ENCODE measurements at regions of chr10 and their contacts with region 1.

Region 1: GRCh38 chr10:102231357-102232318 is 5.5 kb downstream of the ELOVL3 start:
- DNase-seq: peak; percentile 58 to 67 (median 65)
- H3K4me3 ChIP-seq: peak overlapping the region in 1 of 2 donors; percentile 41
- H3K4me3 Mint-ChIP-seq: peak overlapping the region; percentile 65 to 85 (median 80)
- H3K27ac ChIP-seq: no peak overlapping the region
- H3K27ac Mint-ChIP-seq: peak overlapping the region in 1 of 7 donors; percentile 56
- H3K4me1 ChIP-seq: peaks cover 20% of the 10 kb centered on the region
- H3K4me1 Mint-ChIP-seq: peaks cover 0 to 14% (median 4%) of the 10 kb centered on the region in 4 donors
- H3K27me3 ChIP-seq: peaks cover 9% of the 10 kb centered on the region
- H3K27me3 Mint-ChIP-seq: peaks cover 19 to 35% of the 10 kb centered on the region in 2 donors

Region 2: DNA sequence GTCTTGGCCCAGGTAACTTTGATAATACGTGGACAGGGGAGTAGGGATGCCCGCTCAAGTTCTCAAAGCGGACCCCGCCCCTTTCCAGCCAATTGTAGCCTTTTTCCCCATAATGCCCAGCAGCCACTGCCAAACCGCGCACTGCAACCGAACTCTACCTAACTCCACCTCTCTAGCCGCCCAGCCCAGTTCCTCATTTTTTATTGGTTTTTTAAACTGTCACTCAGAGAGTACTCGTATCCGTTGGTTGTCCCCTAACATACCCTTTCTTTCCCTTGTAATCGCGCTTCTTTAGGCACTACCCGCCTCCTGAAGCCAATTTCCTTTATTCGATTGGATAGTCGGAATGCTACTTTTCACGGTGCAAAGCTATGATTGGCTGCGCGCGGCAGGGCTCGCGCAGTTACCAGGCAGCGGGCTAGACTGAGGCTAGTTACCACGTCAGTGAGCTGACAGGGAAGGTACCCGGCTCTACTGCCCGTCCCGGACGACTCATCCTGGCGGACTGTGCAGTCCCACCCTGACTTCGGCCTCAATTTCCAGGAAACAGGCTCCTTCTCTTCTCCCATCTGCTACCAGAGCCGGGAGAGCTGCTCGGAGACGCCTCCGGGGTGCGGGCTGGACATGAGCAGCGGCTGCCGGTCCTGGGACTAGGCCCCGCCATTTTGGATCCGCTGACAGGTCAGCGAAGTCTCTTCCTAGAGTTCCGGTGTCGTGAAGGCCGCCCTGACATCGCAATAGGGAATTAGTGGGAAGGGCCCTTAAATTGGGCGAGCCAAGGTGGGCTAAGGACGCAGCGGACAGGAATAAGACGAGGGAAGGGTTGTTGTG is 13.7 kb after region 1 on chr10 and contains the start of gene GBF1:
- CTCF ChIA-PET with region 1: interaction called, 46 read pairs
- POLR2A ChIA-PET with region 1: interaction called, 22 read pairs
- intact Hi-C with region 1: loop called (anchors 1 kb)
- DNase-seq: peak; percentile 95 to 98 (median 96)
- H3K4me3 ChIP-seq: peak within 1 kb of the TSS; percentile 51 to 94
- H3K4me3 Mint-ChIP-seq: peak within 1 kb of the TSS; percentile 84 to 99 (median 98)
- H3K27ac ChIP-seq: peak within 1 kb of the TSS; percentile 96
- H3K27ac Mint-ChIP-seq: peak within 1 kb of the TSS; percentile 89 to 98 (median 97)
- H3K4me1 ChIP-seq: peaks cover 64% of the 10 kb centered on the region
- H3K4me1 Mint-ChIP-seq: peaks cover 38 to 66% (median 50%) of the 10 kb centered on the region in 4 donors
- H3K27me3 ChIP-seq: peaks cover 6% of the 10 kb centered on the region
- H3K27me3 Mint-ChIP-seq: peaks cover 3 to 16% of the 10 kb centered on the region in 2 donors
- total RNA-seq, gene GBF1: 39.6 to 44.7 TPM

Region 3: DNA sequence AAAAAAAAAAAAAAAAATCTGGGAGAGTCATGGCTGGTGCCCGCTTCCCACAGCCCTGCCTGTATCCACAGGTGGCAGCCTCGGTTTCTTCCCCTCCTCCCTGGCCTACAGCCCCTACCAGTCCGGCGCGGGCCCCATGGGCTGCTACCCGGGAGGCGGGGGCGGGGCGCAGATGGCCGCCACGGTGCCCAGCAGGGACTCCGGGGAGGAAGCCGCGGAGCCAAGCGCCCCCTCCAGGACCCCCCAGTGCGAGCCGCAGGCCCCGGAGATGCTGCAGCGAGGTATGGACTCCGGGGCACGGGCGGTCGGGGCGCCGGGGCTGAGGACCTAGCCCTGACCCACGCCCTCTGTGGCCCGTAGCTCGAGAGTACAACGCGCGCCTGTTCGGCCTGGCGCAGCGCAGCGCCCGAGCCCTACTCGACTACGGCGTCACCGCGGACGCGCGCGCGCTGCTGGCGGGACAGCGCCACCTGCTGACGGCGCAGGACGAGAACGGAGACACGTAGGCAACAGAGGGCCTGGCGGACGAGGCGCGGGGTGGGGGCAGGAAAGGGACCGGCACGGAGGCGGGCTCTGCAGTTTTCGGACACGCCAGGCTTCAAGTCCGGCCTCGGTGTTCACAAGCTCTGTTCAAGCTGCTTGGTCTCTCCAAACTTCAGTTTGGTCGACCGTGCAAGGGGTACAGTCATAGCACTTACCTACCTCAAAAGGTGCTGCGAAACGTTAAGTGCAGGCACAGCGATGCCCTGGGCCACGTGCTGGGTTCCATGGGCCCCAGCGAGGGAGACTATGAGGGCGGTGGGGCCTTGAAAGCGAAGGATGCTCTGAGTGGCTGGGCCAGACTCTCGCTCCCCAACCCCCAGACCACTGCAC is 167.8 kb after region 1 on chr10:
- CTCF ChIA-PET with region 1: interaction called, 88 read pairs
- POLR2A ChIA-PET with region 1: interaction called, 23 read pairs
- intact Hi-C with region 1: loop called (anchors 1 kb)
- DNase-seq: peak; percentile 86 to 90 (median 87)
- H3K4me3 ChIP-seq: peak overlapping the region in 1 of 2 donors; percentile 49
- H3K4me3 Mint-ChIP-seq: peak overlapping the region; percentile 53 to 81 (median 74)
- H3K27ac ChIP-seq: peak overlapping the region; percentile 100
- H3K27ac Mint-ChIP-seq: peak overlapping the region; percentile 89 to 100 (median 100)
- H3K4me1 ChIP-seq: peaks cover 44% of the 10 kb centered on the region
- H3K4me1 Mint-ChIP-seq: peaks cover 19 to 68% (median 32%) of the 10 kb centered on the region in 4 donors
- H3K27me3 ChIP-seq: no peaks in the 10 kb centered on the region
- H3K27me3 Mint-ChIP-seq: no peaks in the 10 kb centered on the region

Region 4: GRCh38 chr10:102998005-102998404 is 766.4 kb after region 1 on chr10:
- CTCF ChIA-PET with region 1: no interaction called
- POLR2A ChIA-PET with region 1: no interaction called
- intact Hi-C with region 1: no loop called
- DNase-seq: no peak
- H3K4me3 ChIP-seq: no peak overlapping the region
- H3K4me3 Mint-ChIP-seq: no peak overlapping the region
- H3K27ac ChIP-seq: no peak overlapping the region
- H3K27ac Mint-ChIP-seq: no peak overlapping the region
- H3K4me1 ChIP-seq: peaks cover 7% of the 10 kb centered on the region
- H3K4me1 Mint-ChIP-seq: peaks cover 4 to 21% (median 12%) of the 10 kb centered on the region in 4 donors
- H3K27me3 ChIP-seq: no peaks in the 10 kb centered on the region
- H3K27me3 Mint-ChIP-seq: no peaks in the 10 kb centered on the region

Measured in CD4-positive, alpha-beta memory T cell (primary cell).